ENCODE measurements at regions of chr17 and their contacts with region 1.

Region 1: DNA sequence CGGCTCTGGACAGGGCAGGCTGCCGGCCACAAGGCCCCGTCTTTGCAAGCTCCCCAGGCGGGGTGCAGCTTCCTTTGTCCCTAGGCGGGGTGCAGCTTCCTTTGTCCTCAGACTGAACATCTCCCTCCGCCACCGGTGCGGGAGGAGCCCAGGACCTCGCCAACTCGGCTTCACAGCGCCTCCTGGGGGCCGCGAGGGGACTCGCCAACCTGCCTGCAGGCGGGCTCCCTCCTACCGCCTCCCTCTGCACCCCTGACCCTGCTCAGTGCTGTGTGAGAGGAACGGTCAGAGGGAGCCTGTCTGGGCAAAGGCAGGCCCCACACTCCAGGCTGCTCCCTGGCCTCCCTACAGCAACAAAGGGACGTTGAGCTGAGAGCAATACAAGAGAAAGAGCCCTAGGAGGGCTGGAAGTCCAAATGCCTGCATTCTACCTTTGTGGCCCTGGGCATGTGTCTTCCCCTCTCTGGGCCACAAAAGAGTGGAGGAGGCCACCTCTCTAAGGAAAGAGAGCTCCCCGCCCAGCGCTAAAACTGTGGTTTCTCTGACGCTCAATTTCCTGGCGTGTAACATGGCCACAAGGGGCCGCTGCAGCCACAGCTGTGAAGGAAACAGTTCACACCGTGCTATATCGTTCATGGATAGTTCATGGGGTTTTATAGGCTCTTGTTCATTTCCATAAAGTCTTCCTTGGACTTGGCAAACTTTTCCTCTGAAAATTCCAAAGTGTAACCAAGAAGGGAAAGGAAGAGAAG is 20.9 kb upstream of the KRT19 start:
- DNase-seq: peak; percentile 94 to 96
- ATAC-seq: peak; percentile 79 to 91
- H3K4me3 ChIP-seq: peak overlapping the region; percentile 33
- H3K27ac ChIP-seq: peak overlapping the region; percentile 89 to 96
- H3K4me1 ChIP-seq: peaks cover 40% of the 10 kb centered on the region
- CTCF ChIP-seq: peak; percentile 99
- EP300 ChIP-seq: no peak
- POLR2A ChIP-seq: peak; percentile 16; the same call in 1 of the 2 replicates
- RAD21 ChIP-seq: peak; percentile 93 to 97

Region 2: DNA sequence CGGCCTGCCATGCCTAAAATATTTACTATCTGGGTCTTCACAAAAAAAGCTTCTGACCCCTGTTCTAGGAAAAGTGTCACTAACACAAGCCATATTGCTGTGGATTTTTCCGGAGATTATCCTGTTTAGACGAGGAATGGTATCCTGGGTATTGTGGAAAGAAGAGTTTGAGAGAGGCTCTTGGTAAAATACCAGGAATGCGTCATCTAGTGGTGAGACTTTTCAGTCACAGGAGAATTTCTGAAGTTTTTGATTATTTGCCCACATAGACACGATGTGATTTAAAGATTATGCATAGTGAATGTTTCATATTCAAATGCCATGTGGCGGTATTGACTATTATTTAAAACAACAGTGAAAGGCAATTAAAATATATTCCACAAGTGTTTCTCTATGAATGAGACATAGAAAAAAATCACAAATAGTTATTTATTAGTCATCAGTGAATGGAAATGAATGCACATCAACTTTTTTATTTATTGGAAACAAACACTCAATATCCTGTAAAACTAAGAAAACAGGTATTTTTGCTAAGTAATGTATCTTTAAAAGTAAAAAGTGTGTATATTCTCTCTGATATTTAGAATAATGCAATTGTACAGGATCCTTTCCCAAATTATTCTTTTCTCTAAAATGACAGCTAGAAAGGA is 757.1 kb before region 1 on chr17:
- CTCF ChIA-PET with region 1: interaction called, 11 read pairs
- POLR2A ChIA-PET with region 1: no interaction called
- DNase-seq: peak; percentile 45 to 61
- ATAC-seq: peak; percentile 73 to 74
- H3K4me3 ChIP-seq: no peak overlapping the region
- H3K27ac ChIP-seq: no peak overlapping the region
- H3K4me1 ChIP-seq: no peaks in the 10 kb centered on the region
- CTCF ChIP-seq: peak; percentile 98
- EP300 ChIP-seq: no peak
- POLR2A ChIP-seq: no peak
- RAD21 ChIP-seq: peak; percentile 83 to 86

Region 3: DNA sequence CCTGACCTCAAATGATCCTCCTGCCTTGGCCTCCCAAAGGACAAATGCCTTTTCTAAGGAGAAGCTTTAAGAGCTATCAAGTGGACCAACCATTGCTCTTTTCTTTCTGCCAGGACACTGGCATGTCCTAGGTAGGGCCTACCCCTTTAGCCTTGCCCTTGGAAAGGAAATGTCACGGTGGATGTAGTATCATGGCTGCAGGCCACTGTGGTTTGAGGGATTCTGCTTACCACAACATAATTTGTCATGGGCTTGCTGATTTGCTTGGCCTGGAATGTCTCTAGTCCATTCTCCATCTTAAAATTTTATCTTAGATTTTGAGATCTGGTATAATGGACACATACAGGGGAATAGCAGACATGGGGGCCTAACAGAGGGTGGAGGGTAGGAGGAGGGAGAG is 670.0 kb before region 1 on chr17:
- CTCF ChIA-PET with region 1: interaction called, 12 read pairs
- POLR2A ChIA-PET with region 1: no interaction called
- DNase-seq: no peak
- ATAC-seq: no peak
- H3K4me3 ChIP-seq: no peak overlapping the region
- H3K27ac ChIP-seq: no peak overlapping the region
- H3K4me1 ChIP-seq: no peaks in the 10 kb centered on the region
- CTCF ChIP-seq: no peak
- EP300 ChIP-seq: no peak
- POLR2A ChIP-seq: no peak
- RAD21 ChIP-seq: no peak

Region 4: GRCh38 chr17:41329281-41329948 is 219.6 kb before region 1 on chr17:
- CTCF ChIA-PET with region 1: interaction called, 34 read pairs
- POLR2A ChIA-PET with region 1: interaction called, 5 read pairs
- DNase-seq: peak; percentile 78 to 79
- ATAC-seq: peak; percentile 75 to 95
- H3K4me3 ChIP-seq: no peak overlapping the region
- H3K27ac ChIP-seq: peak overlapping the region in 1 of 2 experiments; percentile 44; a peak in 1 of 6 replicates
- H3K4me1 ChIP-seq: no peaks in the 10 kb centered on the region
- CTCF ChIP-seq: peak; percentile 73
- EP300 ChIP-seq: no peak
- POLR2A ChIP-seq: no peak
- RAD21 ChIP-seq: peak; percentile 88 to 95

Region 5: GRCh38 chr17:41464682-41465081 is 84.3 kb before region 1 on chr17:
- CTCF ChIA-PET with region 1: interaction called, 25 read pairs
- POLR2A ChIA-PET with region 1: no interaction called
- DNase-seq: peak; percentile 50 to 79
- ATAC-seq: peak; percentile 76 to 77; a peak in 5 of 6 replicates
- H3K4me3 ChIP-seq: no peak overlapping the region
- H3K27ac ChIP-seq: no peak overlapping the region
- H3K4me1 ChIP-seq: peaks cover 13% of the 10 kb centered on the region
- CTCF ChIP-seq: no peak
- EP300 ChIP-seq: no peak
- POLR2A ChIP-seq: no peak
- RAD21 ChIP-seq: no peak

Region 6: DNA sequence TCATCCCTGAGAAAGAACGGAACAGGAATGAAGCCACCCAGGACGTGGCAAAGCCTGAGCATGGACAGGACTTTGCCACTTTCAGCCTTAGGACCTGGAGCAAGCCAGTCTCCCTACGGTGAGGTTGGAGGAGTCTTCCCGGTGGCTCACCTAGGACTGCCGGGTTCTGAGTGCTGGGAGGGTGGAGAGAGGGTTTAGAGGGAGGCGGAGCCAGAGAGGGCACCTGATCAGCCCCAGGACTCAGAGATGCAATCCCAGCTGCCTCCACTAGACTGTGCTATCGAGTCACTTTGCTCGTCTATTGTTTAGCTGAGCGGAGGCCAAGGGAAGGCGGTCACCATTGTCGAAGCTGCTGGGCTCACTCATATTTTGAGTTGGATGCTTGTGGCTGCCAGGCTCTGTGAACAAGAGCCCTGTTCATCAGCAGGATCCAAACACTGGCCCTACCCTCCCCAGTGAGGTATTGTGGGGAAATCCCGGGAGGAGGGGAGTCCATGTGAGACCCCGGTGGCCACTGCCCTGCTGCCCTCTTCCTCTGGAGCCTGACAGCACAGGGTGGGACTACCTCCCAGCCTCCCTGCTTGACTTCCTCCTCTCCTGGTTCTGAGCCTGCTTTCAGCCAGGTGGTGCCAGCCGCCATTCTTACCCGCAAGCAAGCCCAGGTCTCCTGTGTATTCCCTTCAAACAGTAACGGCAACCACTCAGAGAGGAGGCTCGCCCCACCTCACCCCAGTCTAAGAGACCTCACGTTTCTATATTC is 30.6 kb after region 1 on chr17:
- CTCF ChIA-PET with region 1: interaction called, 353 read pairs
- POLR2A ChIA-PET with region 1: interaction called, 3 read pairs
- DNase-seq: peak; percentile 87 to 98
- ATAC-seq: peak; percentile 88 to 96
- H3K4me3 ChIP-seq: no peak overlapping the region; the same call in 2 of the 3 replicates
- H3K27ac ChIP-seq: peak overlapping the region; percentile 25 to 37; a peak in 3 of 6 replicates
- H3K4me1 ChIP-seq: peaks cover 6% of the 10 kb centered on the region
- CTCF ChIP-seq: peak; percentile 69
- EP300 ChIP-seq: no peak
- POLR2A ChIP-seq: no peak
- RAD21 ChIP-seq: peak; percentile 64 to 81

Region 7: GRCh38 chr17:41665566-41666236 is 116.7 kb after region 1 on chr17:
- CTCF ChIA-PET with region 1: interaction called, 508 read pairs
- POLR2A ChIA-PET with region 1: interaction called, 4 read pairs
- DNase-seq: peak; percentile 89 to 100
- ATAC-seq: peak; percentile 72 to 91
- H3K4me3 ChIP-seq: peak overlapping the region; percentile 47
- H3K27ac ChIP-seq: peak overlapping the region; percentile 86 to 92
- H3K4me1 ChIP-seq: peaks cover 23% of the 10 kb centered on the region
- CTCF ChIP-seq: peak; percentile 98
- EP300 ChIP-seq: no peak
- POLR2A ChIP-seq: peak; percentile 74
- RAD21 ChIP-seq: peak in 1 of 2 experiments; percentile 46; a peak in 2 of 5 replicates

Region 8: DNA sequence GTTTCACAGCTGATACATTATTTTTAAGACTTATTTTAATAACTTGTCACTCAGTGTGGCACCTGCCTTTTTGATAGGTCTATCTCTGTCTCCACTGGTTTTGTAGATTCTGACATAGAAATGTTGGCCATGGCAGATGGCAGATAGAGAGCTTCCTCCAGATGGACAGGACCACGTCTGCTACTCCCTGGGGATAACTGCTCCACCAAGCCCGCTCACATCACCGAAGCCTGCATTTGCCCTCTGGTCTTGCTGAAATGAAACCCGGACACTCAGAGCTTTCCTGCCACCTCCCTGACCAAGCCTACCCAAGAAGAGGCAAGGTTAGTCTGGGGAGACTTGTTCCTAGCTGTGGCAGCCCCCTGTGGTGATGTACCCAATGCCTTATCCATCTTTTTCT is 201.8 kb after region 1 on chr17:
- CTCF ChIA-PET with region 1: no interaction called
- POLR2A ChIA-PET with region 1: no interaction called
- DNase-seq: no peak
- ATAC-seq: no peak
- H3K4me3 ChIP-seq: no peak overlapping the region
- H3K27ac ChIP-seq: no peak overlapping the region
- H3K4me1 ChIP-seq: no peaks in the 10 kb centered on the region
- CTCF ChIP-seq: no peak
- EP300 ChIP-seq: no peak
- POLR2A ChIP-seq: no peak
- RAD21 ChIP-seq: no peak